ENCODE measurements at regions of chr6 and their contacts with region 1.

Region 1: GRCh38 chr6:111873178-111874024 is at the start of gene FYN:
- DNase-seq: peak; percentile 98
- ATAC-seq: peak; percentile 94
- H3K4me3 ChIP-seq: peak within 1 kb of the TSS; percentile 61 to 89 (median 81)
- H3K4me3 Mint-ChIP-seq: peak within 1 kb of the TSS; percentile 99
- H3K27ac ChIP-seq: peak within 1 kb of the TSS; percentile 66 to 76
- H3K27ac Mint-ChIP-seq: peak within 1 kb of the TSS; percentile 94
- H3K4me1 ChIP-seq: peaks cover 26 to 36% of the 10 kb centered on the region in 2 donors
- H3K4me1 Mint-ChIP-seq: peaks cover 38% of the 10 kb centered on the region
- H3K27me3 ChIP-seq: no peaks in the 10 kb centered on the region
- H3K27me3 Mint-ChIP-seq: no peaks in the 10 kb centered on the region
- CTCF ChIP-seq: no peak
- total RNA-seq, gene FYN: 92.4 and 94.0 TPM in 2 replicates

Region 2: DNA sequence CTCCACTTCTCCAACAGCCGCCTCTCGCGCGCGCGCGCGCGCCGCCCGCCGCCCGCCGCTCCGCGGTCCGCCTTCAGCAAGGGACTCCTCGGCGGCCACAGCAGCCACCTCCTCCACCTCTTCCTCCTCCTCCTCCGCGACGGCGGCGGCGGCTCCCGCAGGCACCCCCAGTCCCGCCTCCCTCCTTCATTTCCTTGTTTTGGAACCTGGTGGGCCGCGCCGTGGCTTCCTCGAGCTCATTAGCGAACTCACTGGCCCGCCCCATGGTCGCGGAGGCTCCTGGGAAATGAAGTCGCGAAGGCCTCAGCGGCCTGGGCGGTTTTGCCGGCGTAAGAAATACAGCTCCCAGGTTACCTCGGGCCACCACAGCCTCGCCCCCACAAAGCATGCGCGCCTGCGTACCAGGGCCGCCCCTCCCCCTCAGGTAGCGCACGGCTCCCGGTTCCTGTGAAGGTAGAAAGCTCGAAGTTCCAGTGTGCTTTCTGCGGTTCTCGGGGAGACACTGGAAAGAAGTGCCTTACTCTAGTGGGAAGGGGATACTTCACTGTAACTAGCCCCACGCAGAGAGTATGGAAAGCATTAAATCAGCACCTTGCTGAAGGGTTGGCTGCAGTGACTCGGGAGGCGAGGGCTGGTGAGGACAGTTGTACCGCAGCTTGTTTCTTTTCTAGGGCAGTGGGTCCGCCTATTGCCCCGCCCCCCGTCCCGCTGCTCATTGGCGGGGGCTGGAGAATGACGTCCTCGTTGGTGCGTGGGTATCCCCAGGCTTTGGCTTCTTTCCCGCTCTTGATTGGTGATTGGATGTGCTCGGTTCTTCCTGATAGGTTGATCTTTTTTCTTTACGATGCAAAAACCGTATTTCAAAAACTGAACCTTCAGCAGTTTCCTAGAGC is 1057.9 kb before region 1 on chr6 and contains the start of gene CDK19:
- CTCF ChIA-PET with region 1: no interaction called
- POLR2A ChIA-PET with region 1: no interaction called
- intact Hi-C with region 1: loop called (anchors 10 kb)
- DNase-seq: peak; percentile 99
- ATAC-seq: peak; percentile 76
- H3K4me3 ChIP-seq: peak within 1 kb of the TSS; percentile 83 to 99 (median 93)
- H3K4me3 Mint-ChIP-seq: peak within 1 kb of the TSS; percentile 97
- H3K27ac ChIP-seq: peak within 1 kb of the TSS; percentile 84 to 93
- H3K27ac Mint-ChIP-seq: peak within 1 kb of the TSS; percentile 99
- H3K4me1 ChIP-seq: peaks cover 33 to 34% of the 10 kb centered on the region in 2 donors
- H3K4me1 Mint-ChIP-seq: peaks cover 39% of the 10 kb centered on the region
- H3K27me3 ChIP-seq: no peaks in the 10 kb centered on the region
- H3K27me3 Mint-ChIP-seq: no peaks in the 10 kb centered on the region
- CTCF ChIP-seq: no peak
- total RNA-seq, gene CDK19: 44.8 and 45.3 TPM in 2 replicates

Region 3: DNA sequence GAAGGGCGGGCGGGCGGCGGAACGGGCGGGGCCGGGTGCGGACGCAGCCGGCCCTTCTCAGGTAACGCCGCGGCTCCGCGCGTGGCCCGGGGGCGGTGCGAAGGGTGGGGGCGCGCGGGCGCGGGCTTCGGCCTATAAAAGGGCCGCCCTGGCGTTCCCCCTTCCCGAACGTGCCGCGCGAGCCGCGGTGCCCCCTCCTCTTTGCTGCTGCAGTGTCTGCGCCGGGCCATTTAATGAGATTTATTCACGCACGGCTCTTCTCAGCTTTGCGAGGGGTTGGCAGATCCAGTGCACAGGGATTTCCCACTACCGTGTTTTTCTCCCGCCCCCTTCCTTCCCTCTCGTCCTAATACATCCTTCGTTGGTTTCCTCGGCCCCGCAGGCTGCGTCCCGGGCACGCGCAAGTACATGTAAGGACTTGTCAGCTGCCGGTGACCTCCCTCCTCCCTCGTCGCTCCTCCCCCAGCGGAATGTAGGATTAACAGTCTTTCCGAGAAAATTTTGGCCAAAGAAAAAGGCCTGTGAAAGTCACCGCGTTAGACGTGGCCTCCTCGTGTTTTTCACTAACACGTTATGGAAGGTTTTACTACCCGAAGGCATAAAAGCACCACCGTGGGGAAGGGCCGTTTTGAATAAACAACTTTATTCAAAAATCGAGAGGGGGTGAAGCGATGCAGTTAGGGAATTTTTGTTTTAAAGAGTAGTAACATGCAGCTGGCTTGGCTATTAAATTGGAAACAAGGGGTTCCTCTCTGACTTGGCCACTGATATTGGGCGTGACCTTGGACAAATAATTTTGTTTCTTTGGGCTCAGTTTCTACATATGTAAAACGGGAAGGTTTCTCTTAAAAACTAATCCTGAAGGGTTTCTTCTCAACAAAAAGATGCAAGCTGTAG is 389.4 kb before region 1 on chr6:
- CTCF ChIA-PET with region 1: no interaction called
- POLR2A ChIA-PET with region 1: no interaction called
- intact Hi-C with region 1: loop called (anchors 5 kb)
- DNase-seq: no peak
- ATAC-seq: peak; percentile 68
- H3K4me3 ChIP-seq: peak overlapping the region; percentile 72 to 97 (median 88)
- H3K4me3 Mint-ChIP-seq: peak overlapping the region; percentile 96
- H3K27ac ChIP-seq: peak overlapping the region; percentile 98 to 99
- H3K27ac Mint-ChIP-seq: peak overlapping the region; percentile 99
- H3K4me1 ChIP-seq: peaks cover 16 to 18% of the 10 kb centered on the region in 2 donors
- H3K4me1 Mint-ChIP-seq: peaks cover 45% of the 10 kb centered on the region
- H3K27me3 ChIP-seq: no peaks in the 10 kb centered on the region
- H3K27me3 Mint-ChIP-seq: no peaks in the 10 kb centered on the region
- CTCF ChIP-seq: no peak

Region 4: GRCh38 chr6:111764238-111765175 is 108.9 kb before region 1 on chr6:
- CTCF ChIA-PET with region 1: no interaction called
- POLR2A ChIA-PET with region 1: no interaction called
- intact Hi-C with region 1: loop called (anchors 5 kb)
- DNase-seq: peak; percentile 61
- ATAC-seq: peak; percentile 66
- H3K4me3 ChIP-seq: peak overlapping the region in 1 of 5 experiments; percentile 33
- H3K4me3 Mint-ChIP-seq: peak overlapping the region; percentile 71
- H3K27ac ChIP-seq: peak overlapping the region in 1 of 2 donors; percentile 54
- H3K27ac Mint-ChIP-seq: peak overlapping the region; percentile 77
- H3K4me1 ChIP-seq: peaks cover 63 to 66% of the 10 kb centered on the region in 2 donors
- H3K4me1 Mint-ChIP-seq: peaks cover 84% of the 10 kb centered on the region
- H3K27me3 ChIP-seq: no peaks in the 10 kb centered on the region
- H3K27me3 Mint-ChIP-seq: no peaks in the 10 kb centered on the region
- CTCF ChIP-seq: no peak

Region 5: DNA sequence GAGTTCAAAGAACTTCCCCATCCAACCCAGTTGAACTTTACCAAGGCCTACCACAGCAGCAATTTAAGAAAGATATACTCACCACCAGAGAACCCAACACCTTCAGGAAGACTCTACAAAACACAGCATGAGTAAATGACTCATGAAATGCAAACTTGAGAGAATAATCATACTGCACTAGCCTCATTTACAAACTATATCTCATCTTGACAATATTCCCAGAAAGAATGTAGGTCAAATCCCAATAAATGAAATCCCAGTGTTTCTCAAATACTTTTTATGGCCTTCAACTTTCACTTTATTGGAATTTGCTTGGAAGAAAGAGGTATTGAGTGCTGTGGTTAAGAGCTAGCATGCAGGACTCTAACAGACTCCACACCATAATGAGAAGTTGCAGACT is 60.2 kb before region 1 on chr6:
- CTCF ChIA-PET with region 1: no interaction called
- POLR2A ChIA-PET with region 1: no interaction called
- intact Hi-C with region 1: no loop called
- DNase-seq: no peak
- ATAC-seq: no peak
- H3K4me3 ChIP-seq: no peak overlapping the region
- H3K4me3 Mint-ChIP-seq: no peak overlapping the region
- H3K27ac ChIP-seq: no peak overlapping the region
- H3K27ac Mint-ChIP-seq: no peak overlapping the region
- H3K4me1 ChIP-seq: peaks cover 0 to under 1% of the 10 kb centered on the region in 2 donors
- H3K4me1 Mint-ChIP-seq: peaks cover 3% of the 10 kb centered on the region
- H3K27me3 ChIP-seq: no peaks in the 10 kb centered on the region
- H3K27me3 Mint-ChIP-seq: no peaks in the 10 kb centered on the region
- CTCF ChIP-seq: no peak

Region 6: GRCh38 chr6:111841822-111842221 is 31.6 kb before region 1 on chr6:
- CTCF ChIA-PET with region 1: interaction called, 6 read pairs
- POLR2A ChIA-PET with region 1: interaction called, 8 read pairs
- intact Hi-C with region 1: loop called (anchors 2 kb)
- DNase-seq: peak; percentile 53
- ATAC-seq: no peak
- H3K4me3 ChIP-seq: no peak overlapping the region
- H3K4me3 Mint-ChIP-seq: no peak overlapping the region
- H3K27ac ChIP-seq: peak overlapping the region; percentile 66 to 76
- H3K27ac Mint-ChIP-seq: no peak overlapping the region
- H3K4me1 ChIP-seq: peaks cover 67 to 78% of the 10 kb centered on the region in 2 donors
- H3K4me1 Mint-ChIP-seq: peaks cover 50% of the 10 kb centered on the region
- H3K27me3 ChIP-seq: no peaks in the 10 kb centered on the region
- H3K27me3 Mint-ChIP-seq: no peaks in the 10 kb centered on the region
- CTCF ChIP-seq: no peak

Region 7: GRCh38 chr6:111894272-111894671 is 20.9 kb after region 1 on chr6:
- CTCF ChIA-PET with region 1: no interaction called
- POLR2A ChIA-PET with region 1: no interaction called
- intact Hi-C with region 1: no loop called
- DNase-seq: no peak
- ATAC-seq: no peak
- H3K4me3 ChIP-seq: no peak overlapping the region
- H3K4me3 Mint-ChIP-seq: no peak overlapping the region
- H3K27ac ChIP-seq: no peak overlapping the region
- H3K27ac Mint-ChIP-seq: no peak overlapping the region
- H3K4me1 ChIP-seq: no peaks in the 10 kb centered on the region
- H3K4me1 Mint-ChIP-seq: no peaks in the 10 kb centered on the region
- H3K27me3 ChIP-seq: no peaks in the 10 kb centered on the region
- H3K27me3 Mint-ChIP-seq: no peaks in the 10 kb centered on the region
- CTCF ChIP-seq: no peak

Region 8: GRCh38 chr6:112087136-112087911 is 213.9 kb after region 1 on chr6 and contains the starts of genes FAM229B and TUBE1:
- CTCF ChIA-PET with region 1: no interaction called
- POLR2A ChIA-PET with region 1: no interaction called
- intact Hi-C with region 1: loop called (anchors 1 kb)
- DNase-seq: peak; percentile 96
- ATAC-seq: peak; percentile 97
- H3K4me3 ChIP-seq: peak within 1 kb of the TSS; percentile 69 to 88 (median 83)
- H3K4me3 Mint-ChIP-seq: no peak within 1 kb of the TSS
- H3K27ac ChIP-seq: peak within 1 kb of the TSS; percentile 84
- H3K27ac Mint-ChIP-seq: no peak within 1 kb of the TSS
- H3K4me1 ChIP-seq: peaks cover 7 to 8% of the 10 kb centered on the region in 2 donors
- H3K4me1 Mint-ChIP-seq: no peaks in the 10 kb centered on the region
- H3K27me3 ChIP-seq: peaks cover 0 to 14% (median 5%) of the 10 kb centered on the region in 4 experiments
- H3K27me3 Mint-ChIP-seq: peaks cover 15% of the 10 kb centered on the region
- CTCF ChIP-seq: no peak
- total RNA-seq, gene FAM229B: 4.0 and 4.4 TPM in 2 replicates
- total RNA-seq, gene TUBE1: 24.5 and 26.7 TPM in 2 replicates